ENCODE measurements at regions of chr19 and their contacts with region 1.

Region 1: DNA sequence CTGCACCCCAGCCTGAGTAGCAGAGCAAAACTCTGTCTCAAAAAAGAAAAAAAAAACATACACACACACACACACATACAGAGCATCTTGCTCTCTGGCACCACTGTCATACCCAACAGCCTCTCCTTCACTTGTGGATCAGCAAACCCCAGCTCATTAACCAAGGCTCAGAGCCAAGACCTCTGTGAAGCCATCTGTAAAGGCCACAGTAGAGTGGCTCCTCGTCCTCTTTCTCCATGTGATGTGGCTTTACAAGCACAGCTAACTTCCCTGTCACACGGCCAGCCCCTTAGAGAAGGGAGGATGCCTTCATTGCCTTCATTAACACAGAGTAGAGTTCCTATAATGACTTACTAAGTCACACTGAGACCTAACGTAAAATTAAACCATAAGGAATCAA is 62.7 kb upstream of the LSM14A start:
- DNase-seq: no peak
- ATAC-seq: no peak
- H3K4me3 ChIP-seq: no peak overlapping the region
- H3K27ac ChIP-seq: no peak overlapping the region
- H3K4me1 ChIP-seq: no peaks in the 10 kb centered on the region
- H3K27me3 ChIP-seq: peaks cover 1% of the 10 kb centered on the region
- CTCF ChIP-seq: no peak

Region 2: GRCh38 chr19:34067861-34068271 is 41.7 kb before region 1 on chr19:
- intact Hi-C with region 1: loop called (anchors 5 kb)
- DNase-seq: no peak
- ATAC-seq: no peak
- H3K4me3 ChIP-seq: no peak overlapping the region
- H3K27ac ChIP-seq: no peak overlapping the region
- H3K4me1 ChIP-seq: no peaks in the 10 kb centered on the region
- H3K27me3 ChIP-seq: peaks cover 9% of the 10 kb centered on the region
- CTCF ChIP-seq: no peak

Region 3: GRCh38 chr19:34201133-34201532 is 91.5 kb after region 1 on chr19:
- intact Hi-C with region 1: no loop called
- DNase-seq: no peak
- ATAC-seq: no peak
- H3K4me3 ChIP-seq: no peak overlapping the region
- H3K27ac ChIP-seq: no peak overlapping the region
- H3K4me1 ChIP-seq: no peaks in the 10 kb centered on the region
- H3K27me3 ChIP-seq: no peaks in the 10 kb centered on the region
- CTCF ChIP-seq: no peak

Measured in upper lobe of right lung (tissue), 1 donor.